Activated CD8-positive, alpha-beta T cell treated with anti-CD3 and anti-CD28 coated beads, Interleukin-2, amount 10 ng/mL, durations not matched to agents 7 days and 5 days (primary cell): ENCODE measurements at regions of chr15 and their contacts with region 1.

Region 1: DNA sequence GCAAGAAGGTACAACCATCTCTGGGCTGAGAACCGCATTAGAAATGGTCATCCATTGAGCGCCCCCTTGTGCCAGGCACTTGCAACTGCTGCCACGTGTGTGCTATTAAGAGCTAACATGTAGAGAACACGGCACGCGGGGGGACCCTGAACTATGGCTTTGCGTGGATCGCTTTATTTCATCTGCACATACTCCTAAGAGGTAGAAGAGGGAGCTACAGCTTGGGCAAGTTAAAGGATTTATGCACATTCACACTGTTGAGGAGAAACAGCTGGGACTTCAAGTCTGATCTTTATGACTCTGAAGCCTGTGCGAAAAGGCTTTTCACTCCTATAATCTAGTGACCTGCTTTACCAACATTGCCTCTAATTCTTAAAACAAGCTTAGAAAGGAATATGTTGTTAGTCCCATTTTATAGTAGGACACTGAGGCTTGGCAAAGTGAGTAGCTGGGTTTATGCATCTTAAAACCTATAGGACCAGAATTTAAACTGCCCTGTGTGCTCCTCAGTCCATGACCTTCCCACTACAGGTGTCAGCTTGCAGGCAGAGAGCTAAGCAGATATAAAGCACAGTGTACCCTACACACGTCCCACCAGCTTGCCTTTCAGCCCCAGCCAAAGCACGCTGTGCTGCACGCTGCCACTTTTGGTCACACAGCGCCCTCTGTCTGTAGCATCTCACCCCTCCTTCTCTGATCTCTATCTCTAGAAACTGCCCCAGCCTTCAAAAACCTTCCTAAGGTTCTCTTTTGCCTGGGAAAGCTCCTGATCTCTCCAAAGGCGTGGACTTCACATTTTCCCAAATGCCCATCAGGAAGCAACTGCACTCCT is 57.8 kb downstream of the STARD5 start:
- DNase-seq: peak; percentile 91
- ATAC-seq: peak; percentile 92
- H3K4me3 Mint-ChIP-seq: peak overlapping the region; percentile 49
- H3K27ac Mint-ChIP-seq: peak overlapping the region; percentile 63
- H3K4me1 Mint-ChIP-seq: peaks cover 56% of the 10 kb centered on the region
- H3K27me3 Mint-ChIP-seq: no peaks in the 10 kb centered on the region

Region 2: GRCh38 chr15:81000624-81001151 is 265.5 kb before region 1 on chr15 and contains the start of gene TLNRD1:
- CTCF ChIA-PET with region 1: interaction called, 26 read pairs
- POLR2A ChIA-PET with region 1: no interaction called
- DNase-seq: peak; percentile 92
- ATAC-seq: peak; percentile 66
- H3K4me3 Mint-ChIP-seq: peak within 1 kb of the TSS; percentile 90
- H3K27ac Mint-ChIP-seq: peak within 1 kb of the TSS; percentile 96
- H3K4me1 Mint-ChIP-seq: peaks cover 56% of the 10 kb centered on the region
- H3K27me3 Mint-ChIP-seq: no peaks in the 10 kb centered on the region
- total RNA-seq, gene TLNRD1: 32.3 to 33.8 TPM

Region 3: GRCh38 chr15:81106560-81106959 is 159.6 kb before region 1 on chr15:
- CTCF ChIA-PET with region 1: interaction called, 304 read pairs
- POLR2A ChIA-PET with region 1: interaction called, 3 read pairs
- DNase-seq: peak; percentile 58
- ATAC-seq: no peak
- H3K4me3 Mint-ChIP-seq: no peak overlapping the region
- H3K27ac Mint-ChIP-seq: no peak overlapping the region
- H3K4me1 Mint-ChIP-seq: peaks cover 4% of the 10 kb centered on the region
- H3K27me3 Mint-ChIP-seq: peaks cover 31% of the 10 kb centered on the region

Region 4: GRCh38 chr15:81199031-81199779 is 67.0 kb before region 1 on chr15:
- CTCF ChIA-PET with region 1: interaction called, 11 read pairs
- POLR2A ChIA-PET with region 1: no interaction called
- DNase-seq: no peak
- ATAC-seq: no peak
- H3K4me3 Mint-ChIP-seq: no peak overlapping the region
- H3K27ac Mint-ChIP-seq: no peak overlapping the region
- H3K4me1 Mint-ChIP-seq: no peaks in the 10 kb centered on the region
- H3K27me3 Mint-ChIP-seq: no peaks in the 10 kb centered on the region

Region 5: GRCh38 chr15:81296673-81297072 is 30.5 kb after region 1 on chr15:
- CTCF ChIA-PET with region 1: interaction called, 96 read pairs
- POLR2A ChIA-PET with region 1: interaction called, 4 read pairs
- DNase-seq: peak; percentile 90
- ATAC-seq: peak; percentile 72
- H3K4me3 Mint-ChIP-seq: peak overlapping the region; percentile 99
- H3K27ac Mint-ChIP-seq: peak overlapping the region; percentile 93
- H3K4me1 Mint-ChIP-seq: peaks cover 53% of the 10 kb centered on the region
- H3K27me3 Mint-ChIP-seq: no peaks in the 10 kb centered on the region

Region 6: DNA sequence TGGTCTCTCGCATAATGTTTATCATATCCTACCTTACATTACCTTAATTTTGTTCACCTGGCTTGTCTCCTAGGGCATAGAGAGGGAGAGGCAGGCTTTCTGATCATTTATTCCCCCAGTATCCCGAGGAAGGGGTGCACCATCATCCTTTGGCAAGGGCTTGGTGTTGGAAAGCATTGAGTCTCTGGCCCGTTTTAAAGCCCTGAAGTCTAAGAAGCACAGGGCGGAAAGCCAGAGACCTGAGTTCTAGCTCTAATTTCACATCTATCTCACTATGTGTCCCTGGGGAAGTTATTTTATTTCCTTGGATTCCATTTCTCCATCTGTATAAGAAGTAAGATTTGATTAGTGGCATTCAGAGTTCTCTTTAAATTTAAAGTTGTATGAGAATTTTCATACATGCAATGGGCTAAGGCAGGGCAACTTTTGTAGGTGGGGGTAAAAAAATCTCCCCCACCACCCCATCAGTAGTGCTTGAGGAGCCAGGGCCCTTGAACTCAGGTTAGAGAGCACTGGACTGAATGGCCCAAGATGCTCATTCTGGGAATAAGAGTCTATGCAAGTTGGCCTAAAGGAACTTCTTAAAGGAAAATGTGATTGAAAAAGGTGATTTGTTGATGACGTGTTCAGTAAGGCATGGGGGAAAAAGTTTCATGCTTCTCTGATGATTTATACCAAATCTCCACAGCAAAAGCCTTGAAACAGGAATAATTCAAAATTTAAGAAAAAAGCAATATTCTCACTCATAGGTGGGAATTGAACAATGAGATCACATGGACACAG is 97.7 kb after region 1 on chr15:
- CTCF ChIA-PET with region 1: interaction called, 10 read pairs
- POLR2A ChIA-PET with region 1: no interaction called
- DNase-seq: no peak
- ATAC-seq: no peak
- H3K4me3 Mint-ChIP-seq: no peak overlapping the region
- H3K27ac Mint-ChIP-seq: no peak overlapping the region
- H3K4me1 Mint-ChIP-seq: no peaks in the 10 kb centered on the region
- H3K27me3 Mint-ChIP-seq: no peaks in the 10 kb centered on the region

Region 7: GRCh38 chr15:81548365-81549120 is 282.4 kb after region 1 on chr15:
- CTCF ChIA-PET with region 1: no interaction called
- POLR2A ChIA-PET with region 1: no interaction called
- DNase-seq: no peak
- ATAC-seq: no peak
- H3K4me3 Mint-ChIP-seq: no peak overlapping the region
- H3K27ac Mint-ChIP-seq: no peak overlapping the region
- H3K4me1 Mint-ChIP-seq: no peaks in the 10 kb centered on the region
- H3K27me3 Mint-ChIP-seq: peaks cover 3% of the 10 kb centered on the region

Region 8: DNA sequence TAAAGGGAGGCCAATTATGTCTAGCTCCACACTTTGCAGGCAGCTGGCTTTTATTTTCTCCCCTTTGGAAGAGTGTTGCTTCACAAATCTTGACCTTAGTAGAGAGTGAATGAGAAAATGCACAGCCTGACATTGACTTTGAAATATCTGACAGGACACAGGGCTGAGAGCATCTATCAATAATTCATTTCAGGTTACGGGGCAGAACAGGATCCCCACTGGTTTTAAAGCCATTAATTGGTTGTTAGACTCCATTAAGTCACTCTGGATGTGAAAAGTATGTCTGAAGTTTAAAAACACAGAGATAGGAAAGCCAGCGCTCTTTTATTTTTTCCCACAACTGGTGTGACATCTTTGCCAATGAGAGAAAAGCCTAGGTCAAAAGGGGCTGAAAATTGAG is 359.7 kb after region 1 on chr15:
- CTCF ChIA-PET with region 1: no interaction called
- POLR2A ChIA-PET with region 1: no interaction called
- DNase-seq: no peak
- ATAC-seq: no peak
- H3K4me3 Mint-ChIP-seq: no peak overlapping the region
- H3K27ac Mint-ChIP-seq: no peak overlapping the region
- H3K4me1 Mint-ChIP-seq: no peaks in the 10 kb centered on the region
- H3K27me3 Mint-ChIP-seq: no peaks in the 10 kb centered on the region